Heart left ventricle (tissue), 16 donors: ENCODE measurements at regions of chr1 and their contacts with region 1.

Region 1: GRCh38 chr1:246566128-246566812 is at the starts of genes CNST and TFB2M:
- DNase-seq: peak; percentile 98 to 99 (median 98)
- ATAC-seq: peak; percentile 97 to 99 (median 98)
- H3K4me3 ChIP-seq: peak within 1 kb of the TSS; percentile 65 to 99 (median 93)
- H3K27ac ChIP-seq: peak within 1 kb of the TSS; percentile 90 to 98 (median 96)
- H3K4me1 ChIP-seq: peaks cover 15 to 60% (median 51%) of the 10 kb centered on the region in 12 donors
- H3K27me3 ChIP-seq: no peaks in the 10 kb centered on the region
- CTCF ChIP-seq: peak in 2 of 12 donors; percentile 15 to 18
- POLR2A ChIP-seq: peak; percentile 70 to 82
- total RNA-seq, gene CNST: 14.0 to 23.9 (median 19.1) TPM
- total RNA-seq, gene TFB2M: 10.5 to 14.5 (median 12.8) TPM

Region 2: DNA sequence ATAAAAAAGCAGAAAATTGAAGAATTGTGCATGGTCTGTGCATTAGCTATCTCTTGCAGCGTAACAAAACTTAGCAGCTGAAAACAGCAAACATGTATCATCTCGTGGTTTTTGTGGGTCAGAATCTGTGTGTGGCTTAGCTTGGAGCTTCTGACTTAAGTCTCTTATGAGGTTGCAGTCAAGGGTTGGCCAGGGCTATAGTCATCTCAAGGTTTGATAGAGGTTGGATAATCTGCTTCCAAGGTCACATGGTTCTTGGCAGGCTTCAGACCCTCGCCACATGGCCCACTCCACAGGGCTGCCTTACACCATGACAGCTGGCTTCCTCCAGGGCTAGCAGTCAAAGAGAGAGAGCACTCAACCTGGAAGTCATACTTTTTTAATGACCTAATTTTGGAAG is 35.9 kb after region 1 on chr1:
- intact Hi-C with region 1: loop called in 4 of 10 experiments (anchors 5 kb)
- DNase-seq: no peak
- ATAC-seq: no peak
- H3K4me3 ChIP-seq: no peak overlapping the region
- H3K27ac ChIP-seq: no peak overlapping the region
- H3K4me1 ChIP-seq: peaks cover 0 to 31% (median 12%) of the 10 kb centered on the region in 12 donors
- H3K27me3 ChIP-seq: no peaks in the 10 kb centered on the region
- CTCF ChIP-seq: no peak
- POLR2A ChIP-seq: no peak

Region 3: DNA sequence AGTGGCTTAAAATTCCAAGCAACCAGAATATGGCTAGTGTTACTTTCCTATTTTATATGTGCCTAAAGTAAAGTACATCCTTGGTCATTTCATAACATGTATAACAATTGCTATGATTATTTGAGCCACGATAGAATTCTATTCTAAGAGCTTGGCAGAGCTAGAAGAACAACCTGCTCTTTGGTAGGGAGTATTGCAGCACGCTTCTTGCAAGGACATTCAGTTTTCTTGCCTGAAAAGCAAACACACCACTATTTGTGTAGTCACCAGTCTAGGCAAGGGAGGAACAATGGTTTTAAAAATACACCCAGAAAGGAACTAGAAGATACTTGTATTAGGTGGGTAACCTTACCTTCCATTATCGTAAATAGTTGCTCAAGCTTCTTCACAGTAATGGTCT is 51.5 kb after region 1 on chr1:
- intact Hi-C with region 1: loop called in 4 of 10 experiments (anchors 2 to 10 kb)
- DNase-seq: no peak
- ATAC-seq: peak; percentile 75 to 91 (median 81)
- H3K4me3 ChIP-seq: peak overlapping the region in 2 of 12 donors; percentile 2 to 29
- H3K27ac ChIP-seq: peak overlapping the region in 8 of 12 donors; percentile 1 to 76 (median 56)
- H3K4me1 ChIP-seq: peaks cover 0 to 43% (median 6%) of the 10 kb centered on the region in 12 donors
- H3K27me3 ChIP-seq: no peaks in the 10 kb centered on the region
- CTCF ChIP-seq: no peak
- POLR2A ChIP-seq: no peak

Region 4: DNA sequence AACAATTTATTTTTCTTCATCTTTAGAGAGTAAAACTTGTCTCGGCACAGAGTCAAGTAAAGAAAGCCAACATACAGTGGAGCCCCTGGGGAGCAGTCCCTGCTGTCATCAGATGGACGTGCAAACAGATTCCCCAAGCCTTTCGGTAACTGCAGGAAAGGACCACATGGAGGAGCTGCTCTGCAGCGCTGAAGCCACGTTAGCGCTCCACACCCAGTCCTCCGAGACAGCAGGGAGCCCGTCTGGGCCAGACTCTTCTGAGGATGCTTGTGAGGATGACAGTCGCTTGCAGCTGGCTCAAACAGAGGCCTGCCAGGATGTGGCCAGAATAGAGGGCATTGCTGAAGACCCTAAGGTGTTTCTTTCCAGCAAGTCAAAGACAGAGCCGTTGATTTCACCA is 80.8 kb after region 1 on chr1:
- intact Hi-C with region 1: loop called in 6 of 10 experiments (anchors 2 to 10 kb)
- DNase-seq: peak; percentile 73 to 84 (median 74)
- ATAC-seq: peak; percentile 84 to 97 (median 96)
- H3K4me3 ChIP-seq: peak overlapping the region in 10 of 12 donors; percentile 9 to 58 (median 46)
- H3K27ac ChIP-seq: peak overlapping the region in 11 of 12 donors; percentile 35 to 77 (median 58)
- H3K4me1 ChIP-seq: peaks cover 0 to 24% (median 1%) of the 10 kb centered on the region in 12 donors
- H3K27me3 ChIP-seq: no peaks in the 10 kb centered on the region
- CTCF ChIP-seq: peak; percentile 38 to 79 (median 64)
- POLR2A ChIP-seq: no peak